ENCODE measurements at regions of chr5 and their contacts with region 1.

Region 1: DNA sequence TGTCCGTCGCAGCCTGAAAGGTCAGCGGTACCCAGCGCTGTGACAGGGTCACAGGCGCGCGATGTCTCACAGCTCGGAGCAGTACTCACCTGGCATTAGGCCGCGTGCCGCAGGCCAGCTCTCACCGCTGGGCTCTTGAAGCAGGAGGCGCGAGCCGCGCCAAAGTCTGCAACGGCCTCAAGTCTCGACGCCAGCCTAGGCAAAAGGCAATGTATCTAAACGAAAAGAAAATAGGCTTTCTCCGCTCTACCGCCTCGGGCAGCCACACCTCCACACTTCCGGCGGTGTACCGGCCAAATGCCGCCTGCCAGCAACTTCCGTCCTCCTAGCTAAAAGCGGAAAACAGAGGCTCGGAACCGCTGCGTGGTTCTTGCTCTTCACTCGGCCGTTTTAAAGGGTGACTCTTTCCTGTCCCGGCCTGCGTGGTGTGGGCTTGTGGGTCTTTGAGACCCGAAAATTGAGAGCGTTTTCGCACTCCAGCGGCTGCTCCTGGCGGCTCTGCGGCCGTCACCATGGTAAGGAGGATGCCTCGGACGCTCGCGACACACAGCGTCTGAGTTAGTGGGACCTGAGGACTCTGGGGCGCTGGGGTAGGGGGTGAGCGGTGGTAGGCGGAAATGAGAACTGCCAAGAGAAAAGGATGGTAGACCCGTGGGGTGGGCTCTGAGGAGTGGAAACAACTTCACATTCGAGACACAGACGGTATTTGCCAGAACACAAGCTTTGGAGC is at the starts of genes GFM2 and NSA2:
- DNase-seq: peak; percentile 96
- H3K4me3 ChIP-seq: peak within 1 kb of the TSS; percentile 86 to 99 (median 94)
- H3K27ac ChIP-seq: peak within 1 kb of the TSS; percentile 71 to 92 (median 84)
- H3K4me1 ChIP-seq: peaks cover 19 to 63% (median 42%) of the 10 kb centered on the region in 6 donors
- H3K27me3 ChIP-seq: no peaks in the 10 kb centered on the region
- CTCF ChIP-seq: peak in 1 of 11 experiments; percentile 21
- POLR2A ChIP-seq: peak in 2 of 3 donors; percentile 42 to 84
- total RNA-seq, gene GFM2: 18.0 to 34.2 (median 21.6) TPM
- total RNA-seq, gene NSA2: 46.6 to 110 (median 76.8) TPM

Region 2: DNA sequence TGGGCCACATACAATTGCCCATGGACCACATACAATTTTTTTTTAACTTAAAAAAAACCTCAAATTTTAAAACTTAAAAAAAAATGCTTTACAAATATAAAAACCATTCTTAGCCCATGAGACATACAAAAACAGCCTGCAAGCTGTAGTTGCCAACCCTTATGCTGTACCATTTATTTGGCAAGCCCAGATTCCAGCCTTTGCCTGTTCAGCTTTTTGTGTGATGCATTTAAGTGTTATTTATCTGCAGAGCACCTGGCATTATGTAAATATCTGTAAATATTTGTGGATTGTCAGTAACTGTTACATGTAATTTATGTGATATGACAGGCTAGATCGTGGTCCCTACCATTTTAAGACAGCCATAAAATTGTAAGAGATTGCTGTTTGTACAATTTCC is 49.4 kb before region 1 on chr5:
- intact Hi-C with region 1: no loop called
- DNase-seq: no peak
- H3K4me3 ChIP-seq: no peak overlapping the region
- H3K27ac ChIP-seq: no peak overlapping the region
- H3K4me1 ChIP-seq: no peaks in the 10 kb centered on the region
- H3K27me3 ChIP-seq: no peaks in the 10 kb centered on the region
- CTCF ChIP-seq: no peak
- POLR2A ChIP-seq: no peak

Region 3: GRCh38 chr5:74927336-74927735 is 160.3 kb after region 1 on chr5:
- intact Hi-C with region 1: loop called (anchors 10 kb)
- DNase-seq: no peak
- H3K4me3 ChIP-seq: no peak overlapping the region
- H3K27ac ChIP-seq: no peak overlapping the region
- H3K4me1 ChIP-seq: no peaks in the 10 kb centered on the region
- H3K27me3 ChIP-seq: no peaks in the 10 kb centered on the region
- CTCF ChIP-seq: no peak
- POLR2A ChIP-seq: no peak

Measured in spleen (tissue), 13 donors.